ENCODE measurements at regions of chr15 and their contacts with region 1.

Region 1: GRCh38 chr15:39748276-39748675 is 34.4 kb downstream of the FSIP1 start:
- DNase-seq: no peak
- ATAC-seq: no peak
- H3K4me3 ChIP-seq: no peak overlapping the region
- H3K27ac ChIP-seq: no peak overlapping the region
- H3K4me1 ChIP-seq: peaks cover 0 to 12% of the 10 kb centered on the region in 2 donors
- H3K27me3 ChIP-seq: no peaks in the 10 kb centered on the region
- CTCF ChIP-seq: no peak
- POLR2A ChIP-seq: no peak

Region 2: GRCh38 chr15:39686000-39686613 is 62.2 kb before region 1 on chr15:
- in situ Hi-C with region 1: loop called in 1 of 4 experiments (anchors 10 kb)
- intact Hi-C with region 1: loop called (anchors 2 kb)
- DNase-seq: peak in 1 of 2 donors; percentile 9
- ATAC-seq: peak; percentile 65 to 66
- H3K4me3 ChIP-seq: no peak overlapping the region
- H3K27ac ChIP-seq: no peak overlapping the region
- H3K4me1 ChIP-seq: no peaks in the 10 kb centered on the region
- H3K27me3 ChIP-seq: no peaks in the 10 kb centered on the region
- CTCF ChIP-seq: peak; percentile 63 to 76 (median 67)
- POLR2A ChIP-seq: no peak

Region 3: DNA sequence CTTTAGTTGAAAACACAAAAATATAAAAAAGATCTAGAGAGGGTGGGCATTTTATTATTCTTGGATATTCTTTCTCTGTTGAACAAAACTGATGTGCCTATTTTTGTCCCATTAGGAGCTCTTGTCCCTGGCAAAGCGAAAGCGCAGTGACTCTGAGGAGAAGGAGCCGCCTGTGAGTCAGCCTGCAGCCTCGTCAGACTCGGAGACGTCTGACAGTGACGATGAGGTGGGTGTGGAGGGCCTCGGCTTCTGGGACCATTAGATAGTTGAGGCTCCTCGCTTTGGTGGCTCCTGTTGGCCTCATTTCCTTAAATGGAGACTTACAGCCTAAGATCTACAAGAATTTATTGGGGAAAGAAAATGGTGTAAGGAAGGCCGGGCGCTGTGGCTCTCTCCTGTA is 1689.9 kb after region 1 on chr15:
- in situ Hi-C with region 1: no loop called
- intact Hi-C with region 1: no loop called
- DNase-seq: no peak
- ATAC-seq: peak in 1 of 2 donors; percentile 39
- H3K4me3 ChIP-seq: no peak overlapping the region
- H3K27ac ChIP-seq: no peak overlapping the region
- H3K4me1 ChIP-seq: no peaks in the 10 kb centered on the region
- H3K27me3 ChIP-seq: no peaks in the 10 kb centered on the region
- CTCF ChIP-seq: no peak
- POLR2A ChIP-seq: no peak

Measured in gastrocnemius medialis (tissue), 4 donors.